Transverse colon (tissue), 4 donors: ENCODE measurements at regions of chr7 and their contacts with region 1.

Region 1: DNA sequence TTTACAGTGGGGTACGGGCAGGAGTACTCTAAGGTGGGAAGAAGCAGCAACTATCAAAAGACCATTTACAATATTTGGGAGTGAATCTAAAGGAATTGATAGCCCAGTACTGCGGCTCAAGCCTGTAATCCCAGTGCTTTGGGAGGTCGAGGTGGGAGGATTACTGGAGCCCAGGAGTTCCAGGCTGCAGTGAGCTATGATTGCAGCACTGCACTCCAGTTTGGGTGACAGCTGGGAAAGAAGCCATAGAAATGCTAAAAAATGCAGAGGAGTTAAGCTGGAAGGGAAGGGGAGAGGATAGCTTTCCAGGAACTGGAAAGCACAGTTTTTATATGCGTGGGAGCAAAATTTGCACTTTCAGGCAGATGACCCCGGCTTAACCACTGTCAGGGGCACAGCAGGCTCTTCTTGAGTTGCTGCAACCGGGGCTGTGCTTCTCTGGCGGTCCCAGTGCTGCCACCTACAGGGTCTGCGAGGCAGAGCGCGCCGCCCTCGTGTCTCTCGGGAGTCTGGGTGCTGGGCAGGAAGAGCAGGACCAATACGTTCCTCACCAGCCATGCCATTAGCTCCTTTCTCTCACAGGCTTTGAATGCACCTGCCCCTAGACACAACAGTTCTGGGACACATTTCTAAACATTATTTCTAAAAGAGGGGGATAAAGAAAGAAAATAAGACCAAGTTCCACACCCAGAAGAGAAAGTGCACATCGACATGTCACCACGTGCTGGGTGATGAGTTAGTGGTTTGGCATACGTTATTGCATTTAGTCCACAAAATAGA is 10.1 kb upstream of the BMPER start:
- DNase-seq: peak; percentile 82
- H3K4me3 ChIP-seq: no peak overlapping the region
- H3K27ac ChIP-seq: no peak overlapping the region
- H3K4me1 ChIP-seq: peaks cover 0 to 7% (median 0%) of the 10 kb centered on the region in 4 donors
- H3K27me3 ChIP-seq: peaks cover 16% of the 10 kb centered on the region
- CTCF ChIP-seq: peak; percentile 75 to 91 (median 86)
- EP300 ChIP-seq: no peak
- POLR2A ChIP-seq: no peak

Region 2: GRCh38 chr7:33459340-33459751 is 435.9 kb before region 1 on chr7:
- in situ Hi-C with region 1: no loop called
- intact Hi-C with region 1: loop called (anchors 10 kb)
- DNase-seq: no peak
- H3K4me3 ChIP-seq: no peak overlapping the region
- H3K27ac ChIP-seq: no peak overlapping the region
- H3K4me1 ChIP-seq: peaks cover 0 to 3% (median 0%) of the 10 kb centered on the region in 4 donors
- H3K27me3 ChIP-seq: no peaks in the 10 kb centered on the region
- CTCF ChIP-seq: peak; percentile 21 to 39 (median 29)
- EP300 ChIP-seq: no peak
- POLR2A ChIP-seq: no peak

Region 3: DNA sequence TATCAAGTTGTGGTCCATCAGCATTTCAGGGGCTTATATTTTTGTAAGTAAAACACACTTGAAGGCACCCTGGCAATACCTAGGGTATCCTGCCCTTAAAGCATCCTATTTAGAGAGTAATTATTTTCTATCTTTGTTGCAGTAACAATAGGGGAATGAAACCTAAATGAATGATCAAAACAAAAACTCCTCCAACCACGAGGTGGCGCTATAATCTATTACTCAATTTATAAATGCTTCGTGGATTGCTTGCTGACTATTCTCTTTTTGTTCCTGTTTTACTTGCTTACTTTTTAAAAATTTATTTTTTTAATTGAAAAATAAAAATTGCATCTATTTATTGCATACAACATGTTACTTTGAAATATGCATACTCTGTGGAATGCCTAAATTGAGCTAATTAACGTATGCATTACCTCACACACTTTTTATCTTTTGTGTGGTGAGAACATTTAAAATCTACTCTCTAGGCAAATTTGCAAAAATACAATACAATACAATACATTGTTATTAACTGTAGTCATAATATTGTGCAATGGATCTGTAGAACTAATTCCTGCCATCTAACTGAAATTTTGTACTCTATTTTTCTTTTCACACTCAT is 137.6 kb before region 1 on chr7:
- in situ Hi-C with region 1: no loop called
- intact Hi-C with region 1: loop called (anchors 10 kb)
- DNase-seq: no peak
- H3K4me3 ChIP-seq: no peak overlapping the region
- H3K27ac ChIP-seq: no peak overlapping the region
- H3K4me1 ChIP-seq: peaks cover 0 to 14% (median 4%) of the 10 kb centered on the region in 4 donors
- H3K27me3 ChIP-seq: no peaks in the 10 kb centered on the region
- CTCF ChIP-seq: peak; percentile 54 to 71 (median 64)
- EP300 ChIP-seq: no peak
- POLR2A ChIP-seq: no peak

Region 4: GRCh38 chr7:33932832-33933468 is 37.7 kb after region 1 on chr7:
- in situ Hi-C with region 1: no loop called
- intact Hi-C with region 1: no loop called
- DNase-seq: peak; percentile 76
- H3K4me3 ChIP-seq: no peak overlapping the region
- H3K27ac ChIP-seq: no peak overlapping the region
- H3K4me1 ChIP-seq: peaks cover 0 to 3% (median 0%) of the 10 kb centered on the region in 4 donors
- H3K27me3 ChIP-seq: no peaks in the 10 kb centered on the region
- CTCF ChIP-seq: peak; percentile 82 to 95 (median 94)
- EP300 ChIP-seq: no peak
- POLR2A ChIP-seq: no peak